GM12878 (cell line): ENCODE measurements at regions of chr12 and their contacts with region 1.

Region 1: GRCh38 chr12:65232476-65233077 is 45.9 kb upstream of the MSRB3 start:
- DNase-seq: no peak
- ATAC-seq: peak; percentile 50; the same call in 1 of the 3 replicates
- H3K4me3 ChIP-seq: no peak overlapping the region
- H3K27ac ChIP-seq: no peak overlapping the region
- H3K4me1 ChIP-seq: no peaks in the 10 kb centered on the region
- H3K27me3 ChIP-seq: no peaks in the 10 kb centered on the region
- CTCF ChIP-seq: peak in 1 of 3 experiments; percentile 33; a peak in 3 of 6 replicates
- EP300 ChIP-seq: no peak
- POLR2A ChIP-seq: no peak
- RAD21 ChIP-seq: peak; percentile 57

Region 2: DNA sequence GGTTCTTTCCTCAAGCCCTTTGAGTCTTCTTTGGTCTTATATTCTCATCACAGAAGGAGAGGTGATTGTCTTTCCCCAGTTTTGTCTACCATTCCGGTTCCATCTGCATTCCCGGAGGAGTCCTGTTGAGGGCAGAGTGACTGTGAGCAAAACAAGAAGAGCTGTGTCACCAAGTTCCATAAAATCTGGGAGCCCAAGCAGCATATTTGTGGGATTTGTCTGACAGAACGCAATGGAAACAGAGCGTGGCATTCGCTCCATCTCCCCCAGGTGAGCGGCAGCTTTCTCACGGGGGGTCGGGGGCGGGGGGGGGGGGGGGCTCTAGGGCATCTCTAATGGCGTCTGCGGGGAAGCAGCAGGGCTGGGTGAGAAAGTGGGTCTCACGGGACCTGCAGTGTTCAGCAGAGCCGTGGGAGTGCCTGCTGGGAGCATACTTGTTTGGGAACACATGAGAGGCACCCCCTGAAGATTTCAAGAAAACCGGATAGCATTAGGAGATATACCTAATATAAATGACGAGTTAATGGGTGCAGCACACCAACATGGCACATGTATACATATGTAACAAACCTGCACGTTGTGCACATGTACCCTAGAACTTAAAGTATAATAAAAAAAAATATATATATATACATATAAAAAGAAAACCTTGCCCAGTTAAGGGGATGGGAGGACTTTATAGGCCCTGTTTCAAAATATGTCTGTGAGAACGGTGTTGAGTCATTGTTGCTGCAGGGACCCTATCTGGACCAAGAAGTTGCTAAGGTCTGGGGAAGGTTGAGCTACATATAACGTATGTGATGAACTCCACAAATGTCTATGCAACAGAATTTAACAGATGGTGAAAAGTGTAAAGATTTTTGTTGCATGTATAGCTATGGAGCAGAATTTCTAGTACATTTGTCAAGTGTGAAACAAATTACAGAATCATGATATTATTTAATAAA is 348.7 kb before region 1 on chr12:
- CTCF ChIA-PET with region 1: interaction called, 103 read pairs
- POLR2A ChIA-PET with region 1: no interaction called
- RAD21 ChIA-PET with region 1: interaction called, 21 read pairs
- SMC1A ChIA-PET with region 1: interaction called, 53 read pairs
- in situ Hi-C with region 1: no loop called
- intact Hi-C with region 1: no loop called
- DNase-seq: no peak
- ATAC-seq: peak; percentile 59
- H3K4me3 ChIP-seq: peak overlapping the region; percentile 28; the same call in 1 of the 2 replicates
- H3K27ac ChIP-seq: peak overlapping the region; percentile 98
- H3K4me1 ChIP-seq: peaks cover 41% of the 10 kb centered on the region
- H3K27me3 ChIP-seq: no peaks in the 10 kb centered on the region
- CTCF ChIP-seq: no peak
- EP300 ChIP-seq: no peak
- POLR2A ChIP-seq: no peak
- RAD21 ChIP-seq: no peak; the same call in 1 of the 2 replicates

Region 3: GRCh38 chr12:65121049-65121955 is 111.3 kb before region 1 on chr12 and contains the start of gene WIF1:
- CTCF ChIA-PET with region 1: interaction called, 17 read pairs
- POLR2A ChIA-PET with region 1: no interaction called
- RAD21 ChIA-PET with region 1: interaction called, 21 read pairs
- SMC1A ChIA-PET with region 1: interaction called, 57 read pairs
- in situ Hi-C with region 1: no loop called
- intact Hi-C with region 1: loop called (anchors 2 kb)
- DNase-seq: no peak
- ATAC-seq: peak; percentile 87
- H3K4me3 ChIP-seq: peak within 1 kb of the TSS; percentile 60; the same call in 1 of the 2 replicates
- H3K27ac ChIP-seq: no peak within 1 kb of the TSS
- H3K4me1 ChIP-seq: no peaks in the 10 kb centered on the region; the same call in 1 of the 2 replicates
- H3K27me3 ChIP-seq: peaks cover 2 to 5% of the 10 kb centered on the region in 2 experiments; a peak in 3 of 4 replicates
- CTCF ChIP-seq: peak; percentile 31 to 45 (median 41); a peak in 5 of 6 replicates
- EP300 ChIP-seq: no peak
- POLR2A ChIP-seq: no peak
- RAD21 ChIP-seq: 0 out of 2 replicates have a peak, but pooled peaks have one; percentile 12
- polyA plus RNA-seq, gene WIF1: 0.05 TPM in 1 of 2 experiments, not detected in the other

Region 4: GRCh38 chr12:65169320-65170208 is 63.0 kb before region 1 on chr12 and contains the start of gene LEMD3:
- CTCF ChIA-PET with region 1: interaction called, 27 read pairs
- POLR2A ChIA-PET with region 1: interaction called, 5 read pairs
- RAD21 ChIA-PET with region 1: interaction called, 91 read pairs
- SMC1A ChIA-PET with region 1: interaction called, 66 read pairs
- in situ Hi-C with region 1: no loop called
- intact Hi-C with region 1: loop called (anchors 2 kb)
- DNase-seq: peak; percentile 59
- ATAC-seq: peak; percentile 90
- H3K4me3 ChIP-seq: peak within 1 kb of the TSS; percentile 86
- H3K27ac ChIP-seq: peak within 1 kb of the TSS; percentile 83
- H3K4me1 ChIP-seq: peaks cover 5% of the 10 kb centered on the region
- H3K27me3 ChIP-seq: no peaks in the 10 kb centered on the region
- CTCF ChIP-seq: no peak
- EP300 ChIP-seq: peak in 1 of 2 experiments; percentile 16; a peak in 1 of 4 replicates
- POLR2A ChIP-seq: peak; percentile 99
- RAD21 ChIP-seq: no peak
- polyA plus RNA-seq, gene LEMD3: 7.5 to 9.0 TPM

Region 5: DNA sequence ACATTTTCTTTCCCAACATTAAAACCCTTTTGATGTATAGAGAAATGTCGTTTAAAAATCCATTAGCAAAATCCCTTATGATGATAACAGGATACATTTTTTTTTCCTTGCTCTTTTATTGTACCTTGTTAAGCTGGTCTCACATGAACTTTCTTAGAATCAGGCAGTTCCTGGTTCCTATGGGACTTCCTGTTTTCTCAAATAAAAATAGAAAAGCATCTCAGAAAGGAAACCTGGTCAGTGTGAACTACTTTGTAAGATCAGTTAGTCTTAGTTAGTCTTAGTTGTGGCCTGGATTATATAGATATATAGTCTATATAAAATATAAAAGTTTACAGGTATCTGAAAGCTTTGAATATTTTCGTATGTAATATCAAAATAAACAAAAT is 22.9 kb before region 1 on chr12:
- CTCF ChIA-PET with region 1: interaction called, 12 read pairs
- POLR2A ChIA-PET with region 1: no interaction called
- RAD21 ChIA-PET with region 1: interaction called, 10 read pairs
- SMC1A ChIA-PET with region 1: interaction called, 19 read pairs
- in situ Hi-C with region 1: no loop called
- intact Hi-C with region 1: no loop called
- DNase-seq: no peak
- ATAC-seq: peak; percentile 86
- H3K4me3 ChIP-seq: no peak overlapping the region
- H3K27ac ChIP-seq: peak overlapping the region; percentile 80
- H3K4me1 ChIP-seq: peaks cover 21% of the 10 kb centered on the region
- H3K27me3 ChIP-seq: no peaks in the 10 kb centered on the region
- CTCF ChIP-seq: no peak
- EP300 ChIP-seq: no peak
- POLR2A ChIP-seq: no peak
- RAD21 ChIP-seq: no peak

Region 6: GRCh38 chr12:65269603-65270002 is 37.0 kb after region 1 on chr12:
- CTCF ChIA-PET with region 1: no interaction called
- POLR2A ChIA-PET with region 1: no interaction called
- RAD21 ChIA-PET with region 1: no interaction called
- SMC1A ChIA-PET with region 1: no interaction called
- in situ Hi-C with region 1: no loop called
- intact Hi-C with region 1: no loop called
- DNase-seq: no peak
- ATAC-seq: no peak
- H3K4me3 ChIP-seq: no peak overlapping the region
- H3K27ac ChIP-seq: no peak overlapping the region
- H3K4me1 ChIP-seq: no peaks in the 10 kb centered on the region
- H3K27me3 ChIP-seq: no peaks in the 10 kb centered on the region
- CTCF ChIP-seq: no peak
- EP300 ChIP-seq: no peak
- POLR2A ChIP-seq: no peak
- RAD21 ChIP-seq: no peak

Region 7: DNA sequence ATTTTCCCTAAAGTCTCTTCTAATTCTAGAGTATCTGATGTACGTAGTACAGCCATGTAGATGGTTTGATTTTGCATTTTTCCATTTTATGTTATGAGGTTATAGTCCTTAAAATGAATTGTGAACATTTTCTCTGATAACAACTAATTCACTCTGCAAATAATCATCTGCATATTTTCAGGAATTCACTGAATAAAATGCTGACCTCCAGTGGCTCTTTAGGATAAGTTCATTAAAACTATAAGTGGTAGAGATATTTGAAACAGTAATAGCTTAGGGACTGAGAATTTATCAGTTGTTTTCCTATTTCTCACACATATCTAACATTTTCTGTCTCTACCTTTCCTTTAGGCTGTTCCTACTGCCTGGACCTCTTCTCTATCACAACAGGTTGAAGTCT is 50.3 kb after region 1 on chr12:
- CTCF ChIA-PET with region 1: no interaction called
- POLR2A ChIA-PET with region 1: no interaction called
- RAD21 ChIA-PET with region 1: no interaction called
- SMC1A ChIA-PET with region 1: no interaction called
- in situ Hi-C with region 1: no loop called
- intact Hi-C with region 1: no loop called
- DNase-seq: no peak
- ATAC-seq: no peak
- H3K4me3 ChIP-seq: no peak overlapping the region
- H3K27ac ChIP-seq: no peak overlapping the region
- H3K4me1 ChIP-seq: no peaks in the 10 kb centered on the region
- H3K27me3 ChIP-seq: peaks cover 3 to 4% of the 10 kb centered on the region in 2 experiments
- CTCF ChIP-seq: no peak; a peak in 1 of 6 replicates
- EP300 ChIP-seq: no peak
- POLR2A ChIP-seq: no peak
- RAD21 ChIP-seq: no peak